ENCODE measurements at regions of chr21 and their contacts with region 1.

Region 1: DNA sequence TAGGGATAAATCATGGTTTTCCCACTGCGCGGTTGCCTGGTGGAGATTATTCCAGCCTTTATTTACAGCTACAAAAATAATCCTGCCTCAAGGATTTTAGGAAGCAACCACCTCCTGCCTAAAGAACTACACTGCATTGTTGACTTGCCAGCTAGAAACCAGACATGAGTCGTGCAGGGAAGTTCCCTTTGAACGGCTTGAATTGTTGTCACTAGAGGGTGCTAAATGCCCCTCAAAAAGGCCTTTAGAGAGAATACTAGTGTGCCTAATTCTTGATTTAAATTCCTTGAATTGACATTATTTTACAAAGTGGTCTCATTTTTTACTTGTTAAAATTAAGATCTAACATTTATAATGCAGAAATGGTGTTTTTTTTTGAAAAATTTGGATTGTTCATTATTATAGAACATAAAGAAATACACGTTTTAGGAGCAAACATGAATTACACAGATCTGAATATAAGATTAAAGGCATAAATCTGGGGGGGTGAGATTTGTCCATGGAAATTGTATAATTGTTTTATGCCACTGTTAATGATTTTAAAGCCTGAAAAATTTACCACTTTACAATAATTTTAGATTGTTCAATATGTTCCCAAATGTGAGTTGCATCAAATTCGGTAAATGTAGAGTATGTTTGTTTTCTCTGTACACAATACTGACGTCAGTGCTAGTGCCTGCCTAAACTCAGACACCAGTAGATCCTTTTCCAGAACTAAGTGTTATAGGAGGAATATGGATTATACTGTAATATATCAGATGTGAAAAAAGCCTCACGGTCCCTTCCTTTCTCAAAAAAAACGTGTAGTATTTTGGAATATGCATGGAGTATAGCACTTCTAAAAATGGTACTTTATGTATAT is 7.6 kb upstream of the ERG start:
- DNase-seq: no peak
- ATAC-seq: peak; percentile 88 to 90

Region 2: GRCh38 chr21:38712071-38712470 is 206.2 kb after region 1 on chr21:
- intact Hi-C with region 1: loop called in 1 of 2 experiments (anchors 5 kb)
- DNase-seq: no peak
- ATAC-seq: peak in 1 of 2 donors; percentile 44

Region 3: GRCh38 chr21:39137248-39138178 is 631.6 kb after region 1 on chr21:
- intact Hi-C with region 1: loop called (anchors 5 to 10 kb)
- DNase-seq: no peak
- ATAC-seq: peak; percentile 38 to 80

Region 4: DNA sequence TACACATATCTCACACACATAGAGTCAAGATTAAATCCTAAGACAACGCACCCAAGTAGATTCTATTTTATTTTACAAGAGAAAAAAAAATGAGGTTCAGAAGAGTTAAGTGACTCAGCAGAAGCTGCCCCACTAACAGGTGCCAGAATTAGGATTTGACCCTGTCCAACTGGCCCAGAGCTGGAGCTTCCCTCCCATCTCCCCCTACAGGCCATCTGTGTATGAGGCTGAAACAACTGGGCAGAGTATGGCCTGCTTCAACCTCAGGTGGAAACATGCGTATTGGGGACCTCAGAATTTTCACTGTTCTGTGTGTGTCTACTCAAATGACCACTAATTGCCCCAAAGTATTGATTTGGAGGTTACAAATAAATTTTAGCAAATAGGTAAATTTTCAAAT is 647.5 kb after region 1 on chr21:
- intact Hi-C with region 1: loop called in 1 of 2 experiments (anchors 5 kb)
- DNase-seq: no peak
- ATAC-seq: peak in 1 of 2 donors; percentile 53

Measured in left cardiac atrium (tissue), 4 donors.